Sigmoid colon (tissue), 7 donors: ENCODE measurements at regions of chr7 and their contacts with region 1.

Region 1: DNA sequence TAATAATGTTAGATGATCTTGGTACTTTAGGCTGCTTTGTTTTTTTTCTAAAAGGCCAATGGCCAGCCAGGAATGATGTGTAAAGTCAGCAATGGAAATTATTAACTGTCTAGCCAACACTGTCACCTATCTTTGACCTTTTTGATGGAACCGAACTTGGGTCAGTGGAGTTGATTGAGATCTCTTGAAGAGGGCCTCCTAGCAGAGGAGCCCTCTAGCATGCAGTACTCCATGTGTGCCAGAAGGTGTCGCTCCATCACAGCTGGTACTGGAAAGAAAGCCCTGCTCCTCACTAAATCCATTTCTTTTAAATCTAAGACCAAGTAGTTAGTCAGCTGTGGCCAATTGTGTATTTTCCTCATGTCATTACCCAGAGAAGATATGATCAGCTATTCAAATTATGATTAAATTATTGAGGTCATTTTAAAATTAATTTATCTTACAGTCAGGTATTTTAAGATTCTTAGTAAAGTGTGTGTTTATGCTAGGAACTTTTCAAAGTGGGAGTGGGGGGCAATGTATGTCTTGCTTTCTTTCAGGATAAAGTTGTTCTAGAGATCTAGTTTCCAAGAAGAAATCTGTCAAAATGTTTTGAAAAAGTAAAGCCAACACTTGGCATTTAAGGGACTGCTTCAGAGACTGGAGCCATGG is 33.1 kb upstream of the CROT start:
- DNase-seq: no peak
- H3K4me3 ChIP-seq: no peak overlapping the region
- H3K27ac ChIP-seq: no peak overlapping the region
- H3K4me1 ChIP-seq: no peaks in the 10 kb centered on the region
- H3K27me3 ChIP-seq: no peaks in the 10 kb centered on the region
- CTCF ChIP-seq: peak; percentile 70 to 98 (median 88)
- EP300 ChIP-seq: no peak
- POLR2A ChIP-seq: no peak

Region 2: GRCh38 chr7:86201767-86202166 is 1110.6 kb before region 1 on chr7:
- intact Hi-C with region 1: no loop called
- DNase-seq: no peak
- H3K4me3 ChIP-seq: no peak overlapping the region
- H3K27ac ChIP-seq: no peak overlapping the region
- H3K4me1 ChIP-seq: no peaks in the 10 kb centered on the region
- H3K27me3 ChIP-seq: no peaks in the 10 kb centered on the region
- CTCF ChIP-seq: no peak
- EP300 ChIP-seq: no peak
- POLR2A ChIP-seq: no peak

Region 3: GRCh38 chr7:86978808-86979506 is 333.4 kb before region 1 on chr7:
- intact Hi-C with region 1: no loop called
- DNase-seq: no peak
- H3K4me3 ChIP-seq: no peak overlapping the region
- H3K27ac ChIP-seq: no peak overlapping the region
- H3K4me1 ChIP-seq: peaks cover 0 to 4% (median 0%) of the 10 kb centered on the region in 4 donors
- H3K27me3 ChIP-seq: no peaks in the 10 kb centered on the region
- CTCF ChIP-seq: no peak
- EP300 ChIP-seq: no peak
- POLR2A ChIP-seq: no peak

Region 4: DNA sequence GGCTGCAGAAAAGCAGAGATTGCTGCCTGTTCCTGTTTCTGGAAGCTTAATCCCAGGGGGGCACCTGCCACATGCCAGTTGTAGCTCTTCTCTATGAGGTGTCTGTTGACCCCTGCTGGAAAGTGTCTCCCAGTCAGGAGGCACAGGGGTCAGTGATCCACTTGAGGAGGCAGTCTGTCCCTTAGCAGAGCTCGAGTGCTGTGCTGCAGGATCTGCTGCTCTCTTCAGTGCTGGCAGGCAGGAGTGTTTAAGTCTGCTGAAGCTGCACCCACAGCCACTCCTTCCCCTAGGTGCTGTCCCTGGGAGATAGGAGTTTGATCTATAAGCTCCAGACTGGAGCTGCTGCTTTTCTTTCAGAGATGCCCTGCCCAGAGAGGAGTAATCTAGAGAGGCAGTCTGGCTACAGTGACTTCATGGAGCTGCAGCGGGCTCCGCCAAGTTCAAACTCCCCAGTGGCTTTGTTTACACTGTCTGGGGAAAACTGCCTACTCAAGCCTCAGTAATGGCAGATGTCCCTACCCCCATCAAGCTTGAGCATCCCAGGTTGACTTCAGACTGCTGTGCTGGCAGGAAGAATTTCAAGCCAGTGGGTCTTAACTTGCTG is 24.5 kb before region 1 on chr7:
- intact Hi-C with region 1: no loop called
- DNase-seq: no peak
- H3K4me3 ChIP-seq: no peak overlapping the region
- H3K27ac ChIP-seq: no peak overlapping the region
- H3K4me1 ChIP-seq: no peaks in the 10 kb centered on the region
- H3K27me3 ChIP-seq: no peaks in the 10 kb centered on the region
- CTCF ChIP-seq: no peak
- EP300 ChIP-seq: no peak
- POLR2A ChIP-seq: no peak

Region 5: GRCh38 chr7:87416682-87417587 is 104.6 kb after region 1 on chr7:
- intact Hi-C with region 1: loop called (anchors 1 kb)
- DNase-seq: no peak
- H3K4me3 ChIP-seq: no peak overlapping the region
- H3K27ac ChIP-seq: no peak overlapping the region
- H3K4me1 ChIP-seq: no peaks in the 10 kb centered on the region
- H3K27me3 ChIP-seq: no peaks in the 10 kb centered on the region
- CTCF ChIP-seq: peak; percentile 43 to 62 (median 49)
- EP300 ChIP-seq: no peak
- POLR2A ChIP-seq: no peak